Activated naive CD4-positive, alpha-beta T cell treated with anti-CD3 and anti-CD28 coated beads, Interleukin-2, amount 10 ng/mL, durations not matched to agents 7 days and 5 days (primary cell): ENCODE measurements at regions of chr19 and their contacts with region 1.

Region 1: DNA sequence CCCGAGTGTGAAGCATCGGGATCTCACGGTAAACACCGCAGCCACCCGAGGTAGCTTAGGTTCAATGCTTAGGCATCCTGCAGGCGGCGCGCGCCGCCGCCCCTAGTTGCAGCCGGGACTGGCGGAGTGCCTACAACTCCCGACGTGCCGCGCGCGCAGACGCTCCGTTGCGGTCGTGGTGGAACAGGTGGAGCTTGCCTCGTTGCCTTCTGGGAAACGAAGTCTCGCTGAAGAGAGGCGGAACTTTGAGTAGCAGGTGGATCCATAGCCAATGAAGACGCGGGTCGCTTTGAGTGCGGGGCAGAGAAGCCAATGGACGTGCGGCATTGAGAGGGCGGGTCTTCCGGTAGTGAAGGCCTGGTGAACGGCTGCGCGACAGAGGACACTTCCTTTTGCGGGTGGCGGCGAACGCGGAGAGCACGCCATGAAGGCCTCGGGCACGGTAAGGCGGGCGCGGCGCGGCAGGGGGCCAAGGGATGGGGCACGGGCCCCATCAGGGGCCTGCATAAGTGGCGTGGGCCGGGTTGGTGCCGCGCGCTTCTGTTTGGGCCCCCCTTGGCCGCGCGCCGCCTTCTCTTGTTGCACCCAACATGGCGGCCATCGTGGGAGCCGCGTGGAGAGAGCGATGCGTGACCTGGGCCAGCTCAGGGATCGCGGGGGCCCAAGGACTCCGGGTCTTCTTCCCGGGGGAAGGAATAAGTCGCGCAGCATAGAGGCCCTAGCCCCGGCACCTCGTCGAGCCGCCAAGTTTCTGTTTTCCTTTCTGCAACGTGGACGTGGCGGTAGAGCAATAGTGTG is at the start of gene RPL18A:
- DNase-seq: peak; percentile 100
- H3K4me3 Mint-ChIP-seq: peak within 1 kb of the TSS; percentile 96
- H3K27ac Mint-ChIP-seq: peak within 1 kb of the TSS; percentile 95
- H3K4me1 Mint-ChIP-seq: peaks cover 35% of the 10 kb centered on the region
- H3K27me3 Mint-ChIP-seq: peaks cover 7% of the 10 kb centered on the region

Region 2: DNA sequence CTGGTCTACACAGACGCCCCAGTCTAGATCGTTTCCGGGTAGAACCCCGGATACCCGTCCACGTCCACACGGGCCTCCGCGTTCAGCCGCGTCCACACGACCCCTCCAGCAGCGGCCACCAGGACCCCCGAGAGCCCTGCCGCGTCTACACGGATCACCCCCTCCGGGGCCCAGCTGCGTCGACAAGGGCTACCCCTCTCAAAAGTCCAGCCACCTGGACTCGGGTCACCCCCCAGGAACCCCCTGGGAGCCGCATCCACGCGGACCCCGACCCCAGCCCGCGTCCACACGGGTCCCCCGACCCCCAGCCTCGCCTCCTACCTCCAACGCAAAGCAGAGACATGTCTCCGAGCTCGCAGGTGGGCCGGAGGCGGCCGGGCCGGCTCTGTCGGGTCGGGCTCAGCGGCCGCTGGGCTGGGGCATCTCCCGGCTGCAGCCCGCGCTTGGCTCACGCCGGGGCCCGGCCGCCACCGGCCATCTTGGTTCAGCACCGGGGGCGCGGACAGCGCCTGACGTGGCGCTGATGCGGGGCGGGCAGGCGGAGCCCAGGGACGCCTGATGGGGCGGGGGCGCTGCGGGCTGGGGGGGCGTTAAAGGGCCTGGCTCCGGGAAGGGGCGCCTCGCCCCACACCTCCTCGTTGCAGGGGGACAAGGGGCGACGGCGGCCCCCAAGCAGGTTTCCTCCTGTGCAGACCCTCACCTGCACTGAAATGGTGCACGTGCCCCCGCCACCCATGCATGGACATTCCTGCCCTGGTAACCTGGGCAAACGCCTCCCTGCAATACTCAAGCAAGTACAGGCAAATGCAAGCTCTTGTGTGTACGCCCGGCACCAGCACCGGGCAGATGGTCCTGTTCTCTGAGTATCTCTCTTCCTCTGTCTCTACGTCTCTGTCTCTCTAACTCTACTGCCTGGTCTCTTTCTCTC is 171.6 kb before region 1 on chr19 and contains the start of gene UNC13A:
- CTCF ChIA-PET with region 1: no interaction called
- DNase-seq: peak; percentile 72
- H3K4me3 Mint-ChIP-seq: peak within 1 kb of the TSS; percentile 9
- H3K27ac Mint-ChIP-seq: no peak within 1 kb of the TSS
- H3K4me1 Mint-ChIP-seq: peaks cover 11% of the 10 kb centered on the region
- H3K27me3 Mint-ChIP-seq: peaks cover 91% of the 10 kb centered on the region

Region 3: DNA sequence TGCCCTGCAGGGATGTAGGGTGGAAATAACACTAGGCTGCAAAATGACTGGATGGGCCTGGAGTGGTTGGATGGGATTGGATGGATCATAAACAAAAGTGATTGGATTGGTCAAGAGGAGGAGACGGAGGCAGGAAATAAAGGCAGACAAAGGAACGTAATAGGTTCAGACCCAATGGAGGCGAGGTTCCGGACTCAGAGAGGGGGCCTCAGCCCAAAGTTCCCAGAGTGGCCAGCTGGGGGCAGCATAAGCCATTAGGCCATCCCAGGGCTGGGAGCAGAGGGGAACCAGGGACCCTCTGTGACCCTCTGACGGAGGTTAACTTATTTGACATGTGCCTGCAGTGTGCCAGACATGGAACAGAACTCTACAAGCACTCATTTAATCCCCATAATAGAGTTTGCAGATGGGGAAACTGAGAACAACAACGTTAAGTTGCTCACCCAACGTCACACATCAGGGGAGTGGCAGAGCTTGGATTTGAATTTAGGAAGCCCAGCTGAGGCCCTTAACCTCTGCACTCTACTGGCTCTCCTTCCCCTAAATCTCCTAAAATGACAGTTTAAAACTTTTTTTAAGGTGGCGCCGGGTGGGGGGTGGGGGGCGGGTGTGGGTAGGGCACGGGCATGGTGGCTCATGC is 155.8 kb before region 1 on chr19:
- CTCF ChIA-PET with region 1: interaction called, 42 read pairs
- DNase-seq: peak; percentile 81
- H3K4me3 Mint-ChIP-seq: no peak overlapping the region
- H3K27ac Mint-ChIP-seq: no peak overlapping the region
- H3K4me1 Mint-ChIP-seq: no peaks in the 10 kb centered on the region
- H3K27me3 Mint-ChIP-seq: peaks cover 13% of the 10 kb centered on the region

Region 4: DNA sequence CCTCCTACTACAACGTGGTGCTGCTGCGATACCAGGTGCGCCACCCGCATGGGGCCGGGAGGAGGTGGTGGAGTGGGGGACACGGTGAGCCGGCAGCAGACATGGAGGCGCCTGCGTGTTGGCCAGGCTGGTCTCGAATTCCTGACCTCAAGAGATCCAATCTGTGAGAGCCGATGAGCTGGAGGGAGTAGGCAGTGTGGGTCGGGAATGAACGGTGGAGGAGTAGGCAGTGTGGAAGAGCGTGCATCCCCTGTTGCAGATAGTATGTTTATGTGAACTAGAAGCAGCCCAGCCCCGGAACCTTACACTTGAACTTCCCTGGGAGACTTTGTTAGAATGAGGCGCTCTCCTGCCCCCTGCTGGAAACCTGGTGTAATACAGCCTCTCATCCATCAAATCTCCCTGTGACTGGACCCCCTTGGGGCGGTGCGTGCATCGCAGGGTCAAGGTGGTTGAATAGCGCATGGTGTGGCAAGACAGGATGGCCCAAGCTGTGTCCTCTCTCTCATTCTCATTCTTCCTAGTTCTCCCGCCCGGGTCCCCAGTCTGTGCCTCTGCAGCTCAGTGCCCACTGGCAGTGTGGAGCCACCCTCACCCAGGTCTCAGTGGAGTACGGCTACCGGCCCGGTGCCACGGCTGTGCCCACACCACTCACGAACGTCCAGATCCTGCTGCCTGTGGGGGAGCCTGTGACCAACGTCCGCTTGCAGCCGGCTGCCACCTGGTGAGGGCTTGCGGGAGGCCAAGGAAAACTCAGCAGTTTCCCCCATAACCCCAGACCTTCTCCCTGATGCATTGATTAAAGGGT is 75.3 kb before region 1 on chr19:
- CTCF ChIA-PET with region 1: interaction called, 10 read pairs
- DNase-seq: peak; percentile 85
- H3K4me3 Mint-ChIP-seq: no peak overlapping the region
- H3K27ac Mint-ChIP-seq: no peak overlapping the region
- H3K4me1 Mint-ChIP-seq: peaks cover 18% of the 10 kb centered on the region
- H3K27me3 Mint-ChIP-seq: no peaks in the 10 kb centered on the region

Region 5: GRCh38 chr19:17811681-17812080 is 48.1 kb before region 1 on chr19:
- CTCF ChIA-PET with region 1: no interaction called
- DNase-seq: no peak
- H3K4me3 Mint-ChIP-seq: no peak overlapping the region
- H3K27ac Mint-ChIP-seq: no peak overlapping the region
- H3K4me1 Mint-ChIP-seq: peaks cover 18% of the 10 kb centered on the region
- H3K27me3 Mint-ChIP-seq: peaks cover 41% of the 10 kb centered on the region

Region 6: DNA sequence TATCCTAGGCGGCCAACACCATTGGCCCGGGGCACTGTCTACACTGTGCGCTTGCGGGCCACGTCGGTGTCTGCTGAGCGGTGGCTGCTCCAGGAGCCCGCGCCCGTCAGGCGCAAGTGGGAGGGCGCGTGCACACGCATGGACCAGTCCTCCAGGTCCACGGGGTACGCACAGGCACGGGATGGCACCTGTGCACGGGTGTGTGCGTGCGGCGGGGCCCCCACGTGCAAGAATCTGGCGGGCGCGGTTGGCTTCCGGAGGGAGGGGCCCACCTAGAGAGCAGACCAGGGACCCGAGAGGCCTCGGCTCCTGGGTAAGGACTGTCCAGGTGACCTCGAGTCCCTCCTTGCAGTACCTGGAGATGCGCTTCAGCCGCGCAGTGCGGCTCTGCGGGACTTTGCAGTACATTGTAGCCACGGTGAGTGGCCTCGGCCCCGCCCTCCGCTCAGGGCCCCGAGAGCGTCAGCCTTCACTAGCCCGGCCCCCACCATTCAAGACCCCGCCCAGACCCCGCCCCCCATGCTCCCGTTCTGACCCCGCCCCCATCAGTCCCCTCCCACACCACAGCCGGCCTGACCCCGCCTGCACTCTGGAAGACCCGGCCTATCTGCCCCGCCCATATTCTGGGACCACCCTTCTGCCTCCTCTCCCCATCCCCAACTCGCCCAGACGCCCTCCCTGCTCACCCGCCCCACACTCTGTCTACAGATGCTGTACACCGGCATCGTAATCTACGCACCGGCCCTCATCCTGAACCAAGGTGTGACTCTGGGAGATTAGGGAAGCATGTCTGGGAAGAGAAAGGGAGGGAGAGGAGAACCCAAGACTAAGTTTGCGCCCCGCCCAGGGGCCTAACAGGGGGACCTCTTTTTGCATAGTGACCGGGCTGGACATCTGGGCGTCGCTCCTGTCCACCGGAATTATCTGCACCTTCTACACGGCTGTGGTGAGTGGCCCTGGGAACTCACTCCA is 14.3 kb after region 1 on chr19:
- CTCF ChIA-PET with region 1: interaction called, 20 read pairs
- DNase-seq: peak; percentile 79
- H3K4me3 Mint-ChIP-seq: peak overlapping the region; percentile 90
- H3K27ac Mint-ChIP-seq: peak overlapping the region; percentile 87
- H3K4me1 Mint-ChIP-seq: peaks cover 29% of the 10 kb centered on the region
- H3K27me3 Mint-ChIP-seq: peaks cover 3% of the 10 kb centered on the region

Region 7: GRCh38 chr19:17938092-17938845 is 78.5 kb after region 1 on chr19:
- CTCF ChIA-PET with region 1: interaction called, 101 read pairs
- DNase-seq: peak; percentile 90
- H3K4me3 Mint-ChIP-seq: no peak overlapping the region
- H3K27ac Mint-ChIP-seq: no peak overlapping the region
- H3K4me1 Mint-ChIP-seq: peaks cover 10% of the 10 kb centered on the region
- H3K27me3 Mint-ChIP-seq: no peaks in the 10 kb centered on the region

Region 8: GRCh38 chr19:17950310-17951156 is 90.8 kb after region 1 on chr19:
- CTCF ChIA-PET with region 1: no interaction called
- DNase-seq: peak; percentile 56
- H3K4me3 Mint-ChIP-seq: peak overlapping the region; percentile 62
- H3K27ac Mint-ChIP-seq: peak overlapping the region; percentile 65
- H3K4me1 Mint-ChIP-seq: peaks cover 54% of the 10 kb centered on the region
- H3K27me3 Mint-ChIP-seq: peaks cover 76% of the 10 kb centered on the region